T-cell (primary cell): ENCODE measurements at regions of chr11 and their contacts with region 1.

Region 1: DNA sequence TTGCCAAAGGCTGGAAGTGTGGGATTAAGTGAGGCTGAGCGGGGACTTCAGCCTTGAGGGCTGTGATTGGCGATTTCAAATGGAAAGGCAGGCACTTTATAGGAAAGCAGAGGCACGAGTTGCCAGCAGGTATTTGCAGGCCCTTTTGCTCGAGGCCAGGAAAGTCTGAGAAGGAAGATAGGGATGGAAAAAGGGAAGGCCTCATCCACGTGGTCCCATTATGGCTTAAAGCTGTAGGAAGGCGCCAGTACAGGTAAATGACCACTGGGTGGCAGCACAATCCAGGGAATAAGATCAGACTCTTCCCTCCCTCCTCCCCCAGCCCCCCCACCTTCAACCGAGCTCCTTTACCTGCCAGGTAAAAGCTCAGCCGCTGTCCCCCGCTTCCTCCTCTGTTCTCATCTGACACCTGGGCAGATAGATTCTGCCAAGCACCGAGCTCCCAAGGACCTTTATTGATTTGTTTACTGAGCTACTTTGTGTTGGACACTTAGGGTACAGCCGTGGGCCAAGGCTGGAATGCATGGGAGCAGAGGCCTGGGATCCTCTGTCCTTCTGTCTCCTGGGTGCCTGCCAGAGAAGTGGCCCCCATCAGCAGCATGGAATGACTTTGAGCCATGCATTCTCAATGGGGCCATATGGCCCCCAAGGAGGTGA is 7.5 kb downstream of the P2RX3 start:
- DNase-seq: peak; percentile 20 to 86 (median 61)
- ATAC-seq: peak; percentile 78 to 89 (median 82)
- H3K4me3 ChIP-seq: no peak overlapping the region
- H3K4me3 Mint-ChIP-seq: no peak overlapping the region
- H3K27ac ChIP-seq: no peak overlapping the region
- H3K27ac Mint-ChIP-seq: no peak overlapping the region
- H3K4me1 ChIP-seq: peaks cover 0 to 11% of the 10 kb centered on the region in 2 experiments
- H3K4me1 Mint-ChIP-seq: peaks cover 0 to 5% (median 5%) of the 10 kb centered on the region in 3 donors
- H3K27me3 ChIP-seq: peaks cover 0 to 9% of the 10 kb centered on the region in 2 experiments
- H3K27me3 Mint-ChIP-seq: no peaks in the 10 kb centered on the region

Region 2: GRCh38 chr11:57335343-57336110 is 10.2 kb before region 1 on chr11 and contains the start of gene SSRP1:
- CTCF ChIA-PET with region 1: interaction called, 14 to 15 read pairs
- POLR2A ChIA-PET with region 1: no interaction called
- DNase-seq: peak; percentile 71 to 92 (median 85)
- ATAC-seq: peak; percentile 98 to 99 (median 99)
- H3K4me3 ChIP-seq: peak within 1 kb of the TSS; percentile 62 to 73
- H3K4me3 Mint-ChIP-seq: peak within 1 kb of the TSS; percentile 82 to 91 (median 88)
- H3K27ac ChIP-seq: peak within 1 kb of the TSS; percentile 87
- H3K27ac Mint-ChIP-seq: peak within 1 kb of the TSS; percentile 98 to 99
- H3K4me1 ChIP-seq: peaks cover 9 to 24% of the 10 kb centered on the region in 2 experiments
- H3K4me1 Mint-ChIP-seq: peaks cover 29 to 33% (median 30%) of the 10 kb centered on the region in 3 donors
- H3K27me3 ChIP-seq: peaks cover 0 to 6% of the 10 kb centered on the region in 2 experiments
- H3K27me3 Mint-ChIP-seq: no peaks in the 10 kb centered on the region
- total RNA-seq, gene SSRP1: 50.2 to 78.1 (median 75.7) TPM

Region 3: DNA sequence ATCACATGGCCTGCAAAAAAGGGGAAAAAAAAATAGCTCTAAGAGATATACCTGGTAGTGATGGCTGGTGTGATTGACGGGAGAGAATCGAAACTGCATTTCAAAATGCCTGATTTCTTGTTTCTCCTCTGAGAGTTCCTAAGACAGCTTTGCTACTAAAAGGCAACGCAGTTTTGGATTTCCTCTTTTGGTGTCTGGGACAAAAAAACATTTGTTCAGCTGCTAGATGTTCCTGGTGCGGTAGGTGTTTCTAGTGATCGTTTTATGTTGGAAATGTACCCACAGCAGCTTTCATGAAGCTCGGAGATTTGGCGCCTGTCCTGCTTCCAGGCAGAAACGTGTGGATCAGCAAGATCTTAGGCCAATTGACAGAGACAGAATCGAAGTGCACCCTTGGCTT is 10.6 kb after region 1 on chr11:
- CTCF ChIA-PET with region 1: no interaction called
- POLR2A ChIA-PET with region 1: no interaction called
- DNase-seq: no peak
- ATAC-seq: no peak
- H3K4me3 ChIP-seq: no peak overlapping the region
- H3K4me3 Mint-ChIP-seq: no peak overlapping the region
- H3K27ac ChIP-seq: no peak overlapping the region
- H3K27ac Mint-ChIP-seq: no peak overlapping the region
- H3K4me1 ChIP-seq: no peaks in the 10 kb centered on the region
- H3K4me1 Mint-ChIP-seq: no peaks in the 10 kb centered on the region
- H3K27me3 ChIP-seq: peaks cover 0 to 10% of the 10 kb centered on the region in 2 experiments
- H3K27me3 Mint-ChIP-seq: peaks cover 8 to 13% of the 10 kb centered on the region in 2 donors

Region 4: GRCh38 chr11:57530596-57531507 is 185.2 kb after region 1 on chr11 and contains the start of gene TIMM10:
- CTCF ChIA-PET with region 1: interaction called, 9 to 10 read pairs
- POLR2A ChIA-PET with region 1: no interaction called
- DNase-seq: peak; percentile 81 to 97 (median 91)
- ATAC-seq: peak; percentile 94 to 95 (median 94)
- H3K4me3 ChIP-seq: peak within 1 kb of the TSS; percentile 75 to 84
- H3K4me3 Mint-ChIP-seq: peak within 1 kb of the TSS; percentile 89 to 97 (median 91)
- H3K27ac ChIP-seq: peak within 1 kb of the TSS; percentile 83
- H3K27ac Mint-ChIP-seq: peak within 1 kb of the TSS; percentile 96
- H3K4me1 ChIP-seq: peaks cover 10 to 20% of the 10 kb centered on the region in 2 experiments
- H3K4me1 Mint-ChIP-seq: peaks cover 32 to 38% (median 37%) of the 10 kb centered on the region in 3 donors
- H3K27me3 ChIP-seq: no peaks in the 10 kb centered on the region
- H3K27me3 Mint-ChIP-seq: no peaks in the 10 kb centered on the region
- total RNA-seq, gene TIMM10: 20.7 to 33.2 (median 26.2) TPM

Region 5: DNA sequence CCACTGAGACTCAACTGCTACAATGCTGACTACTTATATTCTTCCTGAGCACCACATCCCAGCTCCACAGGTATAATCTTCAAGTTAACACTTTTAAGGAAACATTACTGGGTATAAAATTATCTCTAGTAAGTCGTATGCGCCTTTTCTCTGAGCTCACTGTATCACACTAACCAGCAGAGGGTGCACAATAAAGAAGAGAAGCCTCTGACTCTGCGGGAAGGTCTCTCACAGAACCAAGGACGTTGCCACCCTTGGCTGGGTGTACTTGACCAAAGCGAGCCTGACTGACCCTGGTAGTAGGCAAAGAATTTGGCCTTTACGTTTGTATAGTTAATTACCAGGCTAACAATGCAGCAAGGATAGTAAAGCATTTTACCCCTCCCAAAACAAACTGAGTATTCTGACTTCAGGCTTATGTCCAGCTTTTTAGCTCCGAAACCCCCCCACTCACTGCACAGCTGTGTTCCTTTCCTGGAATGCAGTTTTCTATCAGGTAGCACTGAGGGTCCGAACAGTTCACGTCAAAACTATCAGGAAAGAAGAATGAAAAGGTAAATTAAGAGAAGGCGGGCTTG is 406.1 kb after region 1 on chr11 and contains the start of gene BTBD18:
- CTCF ChIA-PET with region 1: interaction called in 1 of 2 experiments, 3 read pairs
- POLR2A ChIA-PET with region 1: interaction called in 1 of 2 experiments, 10 read pairs
- DNase-seq: peak in 1 of 35 experiments; percentile 30
- ATAC-seq: no peak
- H3K4me3 ChIP-seq: no peak within 1 kb of the TSS
- H3K4me3 Mint-ChIP-seq: no peak within 1 kb of the TSS
- H3K27ac ChIP-seq: no peak within 1 kb of the TSS
- H3K27ac Mint-ChIP-seq: peak within 1 kb of the TSS; percentile 24 to 68
- H3K4me1 ChIP-seq: no peaks in the 10 kb centered on the region
- H3K4me1 Mint-ChIP-seq: peaks cover 9 to 15% (median 13%) of the 10 kb centered on the region in 3 donors
- H3K27me3 ChIP-seq: no peaks in the 10 kb centered on the region
- H3K27me3 Mint-ChIP-seq: no peaks in the 10 kb centered on the region
- total RNA-seq, gene BTBD18: 0.09 to 0.23 TPM in 2 of 5 donors, not detected in the others